ENCODE measurements at regions of chr10 and their contacts with region 1.

Region 1: DNA sequence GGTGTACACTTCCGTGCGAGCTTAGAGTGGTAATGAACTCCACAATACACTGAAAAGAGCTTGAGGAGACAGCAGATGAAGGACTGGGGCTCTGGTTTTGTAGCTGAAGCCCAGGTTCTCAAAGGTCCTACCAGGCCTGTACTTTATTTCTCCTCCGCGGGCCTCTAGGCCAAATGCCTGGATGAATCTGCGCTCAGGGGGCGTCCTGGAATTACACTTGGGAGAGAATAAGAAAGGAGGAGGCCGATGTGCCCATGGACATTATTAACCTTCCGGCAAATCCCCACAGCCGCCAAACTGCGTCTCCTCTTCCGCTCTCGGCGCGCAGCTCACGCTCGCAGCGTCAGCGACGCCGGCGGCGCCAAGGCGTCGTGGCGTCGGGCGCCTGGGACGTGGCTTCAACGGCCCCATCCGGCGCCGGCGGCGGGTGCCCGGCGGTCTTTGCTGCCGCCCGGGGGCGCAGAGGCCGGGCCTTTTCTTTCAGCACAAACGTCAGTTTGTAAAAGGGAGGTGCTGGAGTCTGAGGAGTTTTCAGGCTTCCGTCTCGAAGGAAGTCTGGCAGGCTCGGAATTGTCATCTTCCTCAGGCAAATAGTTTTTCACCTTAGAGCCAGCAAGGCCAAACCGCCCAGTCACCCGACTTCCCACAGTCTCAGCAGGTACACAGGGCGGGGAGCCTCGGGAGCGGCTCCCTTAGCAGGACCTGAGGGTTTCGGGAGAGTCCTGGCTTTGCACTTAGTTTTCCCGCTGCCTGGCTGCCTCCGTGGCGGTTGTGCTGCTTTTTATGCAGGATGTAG is at the start of gene CCDC7:
- DNase-seq: peak; percentile 80 to 91 (median 86)
- ATAC-seq: peak; percentile 95 to 96
- H3K4me3 Mint-ChIP-seq: peak within 1 kb of the TSS; percentile 83 to 98 (median 95)
- H3K27ac Mint-ChIP-seq: peak within 1 kb of the TSS; percentile 98 to 100 (median 99)
- H3K4me1 Mint-ChIP-seq: peaks cover 6 to 19% (median 13%) of the 10 kb centered on the region in 4 donors
- H3K27me3 Mint-ChIP-seq: peaks cover 0 to 5% (median 0%) of the 10 kb centered on the region in 5 donors
- polyA plus RNA-seq, gene CCDC7: 8.9 to 26.0 (median 11.8) TPM

Region 2: GRCh38 chr10:32346134-32346550 is 99.8 kb before region 1 on chr10:
- POLR2A ChIA-PET with region 1: interaction called, 16 read pairs
- DNase-seq: peak; percentile 93 to 99 (median 96)
- ATAC-seq: peak; percentile 79 to 83
- H3K4me3 Mint-ChIP-seq: peak overlapping the region; percentile 92 to 97 (median 95)
- H3K27ac Mint-ChIP-seq: peak overlapping the region; percentile 98 to 100 (median 100)
- H3K4me1 Mint-ChIP-seq: peaks cover 23 to 81% (median 71%) of the 10 kb centered on the region in 4 donors
- H3K27me3 Mint-ChIP-seq: peaks cover 0 to 1% (median 0%) of the 10 kb centered on the region in 5 donors

Region 3: DNA sequence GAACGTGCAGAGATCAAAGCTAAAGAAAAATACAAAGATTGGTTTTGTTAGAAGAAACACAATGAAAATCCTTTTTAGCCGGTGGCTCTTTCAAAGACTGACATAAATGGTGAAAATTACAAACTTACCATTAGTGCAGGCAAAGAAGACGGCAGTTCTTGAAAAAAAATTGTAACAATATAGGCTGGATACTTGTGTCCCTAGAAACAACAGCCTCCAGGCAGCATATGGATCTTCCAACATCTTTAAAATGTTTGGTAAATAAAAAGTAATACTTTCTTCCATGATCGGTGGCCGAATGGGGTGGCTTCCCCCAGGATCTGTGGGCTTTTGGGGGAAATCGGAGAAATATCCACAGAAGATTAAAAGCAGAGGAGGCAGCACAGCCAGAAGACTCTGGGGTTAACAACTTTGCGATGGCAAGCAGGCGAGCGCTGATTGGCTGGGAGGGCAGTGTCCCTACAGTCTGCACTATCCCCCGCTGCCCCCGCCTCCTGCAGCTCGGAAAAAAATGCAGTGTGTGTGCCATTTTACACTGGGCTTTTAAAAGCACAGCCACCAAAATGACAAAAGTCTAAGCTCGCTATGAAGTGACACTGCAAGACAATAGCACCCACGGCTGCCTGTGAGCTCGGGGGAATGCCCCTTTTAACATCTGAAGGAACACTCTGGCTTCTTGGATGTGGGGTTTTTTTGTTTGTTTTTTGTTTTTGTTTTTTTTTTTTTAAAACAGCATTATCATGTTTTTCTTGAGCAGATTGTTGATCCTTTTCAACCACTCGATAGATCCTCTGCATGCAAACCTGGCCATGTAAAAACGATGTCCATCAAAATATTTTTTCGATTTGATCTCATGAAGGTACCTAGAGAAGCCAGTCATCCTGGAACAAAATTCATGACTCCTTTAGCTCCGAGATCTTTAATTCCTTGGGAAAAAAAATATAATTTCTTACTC is 67.3 kb before region 1 on chr10:
- POLR2A ChIA-PET with region 1: interaction called, 64 read pairs
- DNase-seq: peak; percentile 80 to 96 (median 91)
- ATAC-seq: peak; percentile 90 to 91
- H3K4me3 Mint-ChIP-seq: no peak overlapping the region
- H3K27ac Mint-ChIP-seq: no peak overlapping the region
- H3K4me1 Mint-ChIP-seq: peaks cover 6 to 27% (median 18%) of the 10 kb centered on the region in 4 donors
- H3K27me3 Mint-ChIP-seq: no peaks in the 10 kb centered on the region

Region 4: GRCh38 chr10:32459051-32459698 is 13.2 kb after region 1 on chr10:
- POLR2A ChIA-PET with region 1: interaction called, 27 read pairs
- DNase-seq: peak in 9 of 10 donors; percentile 27 to 89 (median 77)
- ATAC-seq: peak; percentile 98 to 100
- H3K4me3 Mint-ChIP-seq: peak overlapping the region; percentile 44 to 78 (median 64)
- H3K27ac Mint-ChIP-seq: peak overlapping the region; percentile 17 to 91 (median 86)
- H3K4me1 Mint-ChIP-seq: peaks cover 19 to 42% (median 38%) of the 10 kb centered on the region in 4 donors
- H3K27me3 Mint-ChIP-seq: no peaks in the 10 kb centered on the region

Measured in naive thymus-derived CD8-positive, alpha-beta T cell (primary cell).